ENCODE measurements at regions of chr10 and their contacts with region 1.

Region 1: DNA sequence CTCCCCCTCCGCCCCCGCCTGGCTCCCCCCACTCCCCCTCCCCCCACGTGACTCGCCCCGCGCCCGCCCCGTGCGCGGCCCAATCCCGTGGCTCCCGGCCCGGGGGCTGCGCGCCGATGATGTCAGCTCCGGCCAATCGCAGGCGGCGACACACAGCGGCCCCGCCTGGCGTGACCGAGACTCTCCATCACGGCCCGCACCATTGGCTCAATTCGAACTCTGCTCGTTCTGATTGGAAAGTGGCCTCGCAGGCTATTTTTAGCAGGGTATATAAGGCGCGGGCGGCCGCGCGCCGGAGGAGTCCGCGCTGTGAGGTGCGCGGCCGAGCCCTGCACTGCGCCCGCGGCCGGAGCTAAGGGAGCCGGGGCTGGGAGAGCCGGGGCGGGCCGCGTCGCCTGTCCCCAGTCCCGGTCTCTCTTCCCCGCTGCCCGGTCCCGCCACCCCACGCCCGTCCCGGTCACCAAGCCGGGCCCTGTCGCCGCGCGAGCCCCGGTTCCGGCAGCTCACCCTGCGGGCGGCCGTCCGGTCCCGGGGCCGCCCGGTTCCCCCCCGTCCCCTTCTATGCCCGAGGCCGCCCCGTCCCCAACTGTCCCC is 345 bp upstream of the KLF6 start:
- DNase-seq: peak; percentile 99
- H3K4me3 Mint-ChIP-seq: peak overlapping the region; percentile 93
- H3K27ac Mint-ChIP-seq: peak overlapping the region; percentile 96
- H3K4me1 Mint-ChIP-seq: peaks cover 49% of the 10 kb centered on the region
- H3K27me3 Mint-ChIP-seq: no peaks in the 10 kb centered on the region

Region 2: DNA sequence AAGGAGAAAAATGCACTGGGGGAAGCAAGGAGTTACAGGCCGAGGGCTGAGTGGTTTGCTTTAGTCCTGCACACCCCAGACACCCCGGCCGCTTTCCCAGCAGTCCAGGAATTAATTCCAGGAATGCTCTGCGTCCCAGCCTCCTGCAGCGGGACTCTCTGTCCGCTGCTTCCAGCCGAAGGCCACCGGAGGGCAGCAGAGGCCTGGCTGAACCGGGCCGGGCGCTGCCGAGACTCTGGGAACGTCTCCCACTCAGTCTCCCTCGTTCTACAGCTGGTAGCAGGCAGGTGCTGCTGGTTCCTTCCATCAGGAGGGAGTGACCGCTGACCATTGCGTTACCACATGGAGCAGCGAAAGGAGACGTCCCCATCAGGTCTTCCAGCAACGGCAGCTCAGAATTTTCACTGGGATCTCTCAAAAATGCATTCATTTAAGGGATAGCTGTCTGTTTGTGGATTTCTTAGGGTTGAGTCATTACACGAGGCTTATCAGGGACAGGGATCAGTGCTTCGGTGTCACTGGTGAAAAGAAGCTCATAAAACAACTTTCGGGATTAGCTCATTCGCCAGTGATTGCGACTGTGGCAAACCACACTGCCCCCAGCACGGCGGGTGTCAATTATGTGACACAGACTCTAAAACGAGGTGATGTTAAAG is 587.9 kb before region 1 on chr10:
- intact Hi-C with region 1: loop called (anchors 2 kb)
- DNase-seq: peak; percentile 76
- H3K4me3 Mint-ChIP-seq: peak overlapping the region; percentile 37
- H3K27ac Mint-ChIP-seq: peak overlapping the region; percentile 57
- H3K4me1 Mint-ChIP-seq: peaks cover 24% of the 10 kb centered on the region
- H3K27me3 Mint-ChIP-seq: peaks cover 82% of the 10 kb centered on the region

Region 3: GRCh38 chr10:3765146-3765545 is 20.2 kb before region 1 on chr10:
- intact Hi-C with region 1: no loop called
- DNase-seq: peak; percentile 63
- H3K4me3 Mint-ChIP-seq: peak overlapping the region; percentile 65
- H3K27ac Mint-ChIP-seq: peak overlapping the region; percentile 80
- H3K4me1 Mint-ChIP-seq: peaks cover 79% of the 10 kb centered on the region
- H3K27me3 Mint-ChIP-seq: no peaks in the 10 kb centered on the region

Region 4: GRCh38 chr10:3805791-3806461 is 20.6 kb after region 1 on chr10:
- intact Hi-C with region 1: loop called (anchors 1 kb)
- DNase-seq: no peak
- H3K4me3 Mint-ChIP-seq: peak overlapping the region; percentile 70
- H3K27ac Mint-ChIP-seq: peak overlapping the region; percentile 99
- H3K4me1 Mint-ChIP-seq: peaks cover 76% of the 10 kb centered on the region
- H3K27me3 Mint-ChIP-seq: no peaks in the 10 kb centered on the region

Region 5: GRCh38 chr10:3835770-3836169 is 50.4 kb after region 1 on chr10:
- intact Hi-C with region 1: loop called (anchors 1 kb)
- DNase-seq: no peak
- H3K4me3 Mint-ChIP-seq: no peak overlapping the region
- H3K27ac Mint-ChIP-seq: peak overlapping the region; percentile 83
- H3K4me1 Mint-ChIP-seq: peaks cover 36% of the 10 kb centered on the region
- H3K27me3 Mint-ChIP-seq: no peaks in the 10 kb centered on the region

Region 6: GRCh38 chr10:4151466-4151865 is 366.1 kb after region 1 on chr10:
- intact Hi-C with region 1: no loop called
- DNase-seq: no peak
- H3K4me3 Mint-ChIP-seq: no peak overlapping the region
- H3K27ac Mint-ChIP-seq: no peak overlapping the region
- H3K4me1 Mint-ChIP-seq: peaks cover 12% of the 10 kb centered on the region
- H3K27me3 Mint-ChIP-seq: no peaks in the 10 kb centered on the region

Region 7: GRCh38 chr10:4651404-4652037 is 866.2 kb after region 1 on chr10:
- intact Hi-C with region 1: loop called (anchors 1 kb)
- DNase-seq: no peak
- H3K4me3 Mint-ChIP-seq: peak overlapping the region; percentile 8
- H3K27ac Mint-ChIP-seq: peak overlapping the region; percentile 85
- H3K4me1 Mint-ChIP-seq: peaks cover 32% of the 10 kb centered on the region
- H3K27me3 Mint-ChIP-seq: peaks cover 3% of the 10 kb centered on the region